Activated naive CD4-positive, alpha-beta T cell treated with anti-CD3 and anti-CD28 coated beads for 36 hours (primary cell): ENCODE measurements at regions of chr7 and their contacts with region 1.

Region 1: GRCh38 chr7:128963327-128963757 is 25.6 kb downstream of the IRF5 start:
- DNase-seq: peak; percentile 80
- H3K4me3 Mint-ChIP-seq: peak overlapping the region; percentile 6
- H3K27ac Mint-ChIP-seq: peak overlapping the region; percentile 87
- H3K4me1 Mint-ChIP-seq: peaks cover 35% of the 10 kb centered on the region
- H3K27me3 Mint-ChIP-seq: no peaks in the 10 kb centered on the region

Region 2: DNA sequence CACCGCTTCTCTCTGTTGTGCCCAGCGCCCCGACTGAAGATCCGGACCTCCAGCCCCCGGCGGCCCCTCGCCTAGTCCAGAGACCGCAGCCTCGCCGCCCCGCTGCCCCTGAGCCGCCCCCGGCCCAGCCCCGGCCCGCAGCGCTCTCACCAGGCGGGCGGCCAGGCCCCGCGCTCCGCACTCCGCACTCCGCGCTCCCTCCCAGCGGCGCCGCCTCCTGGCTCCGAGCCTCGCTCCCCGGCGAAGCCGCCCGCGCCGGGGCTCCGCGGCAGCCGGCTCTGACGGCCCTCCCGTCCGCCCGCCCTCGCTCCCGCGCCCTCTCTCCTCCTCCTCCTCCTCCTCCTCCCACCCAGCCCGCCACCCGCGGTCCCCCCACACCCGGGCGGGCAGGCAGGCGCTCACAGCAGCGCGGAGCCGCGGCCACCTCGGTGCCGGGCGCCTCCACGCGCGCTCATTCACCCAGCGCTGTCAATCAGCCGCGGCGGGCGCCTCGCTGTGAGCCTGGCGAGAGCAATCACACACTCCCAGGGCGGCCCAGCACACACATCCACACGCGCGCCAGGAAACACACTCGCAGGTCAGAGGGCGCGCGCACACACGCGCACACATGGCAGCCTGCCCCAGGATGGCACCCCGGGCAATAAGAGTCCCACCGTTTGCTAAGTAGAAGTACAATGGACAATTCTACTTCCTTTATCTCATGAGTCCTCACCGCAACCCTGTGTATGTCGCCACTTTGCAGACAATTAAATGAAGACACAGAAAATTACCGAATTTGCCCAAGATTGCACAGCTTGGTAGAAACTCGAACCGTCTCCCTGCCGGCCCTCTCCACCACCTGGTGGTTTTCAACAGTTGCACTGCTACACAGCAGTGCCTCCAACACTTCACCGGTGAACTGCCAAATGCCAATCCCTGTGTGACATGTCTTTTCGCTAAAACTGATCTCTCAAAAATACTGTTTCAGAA is 601.6 kb before region 1 on chr7 and contains the start of gene PRRT4:
- CTCF ChIA-PET with region 1: no interaction called
- intact Hi-C with region 1: loop called (anchors 2 kb)
- DNase-seq: peak; percentile 42
- H3K4me3 Mint-ChIP-seq: peak within 1 kb of the TSS; percentile 73
- H3K27ac Mint-ChIP-seq: no peak within 1 kb of the TSS
- H3K4me1 Mint-ChIP-seq: peaks cover 22% of the 10 kb centered on the region
- H3K27me3 Mint-ChIP-seq: peaks cover 46% of the 10 kb centered on the region
- total RNA-seq, gene PRRT4: 0.40 TPM in 1 of 2 experiments, not detected in the other

Region 3: GRCh38 chr7:128938544-128939074 is 24.7 kb before region 1 on chr7:
- CTCF ChIA-PET with region 1: interaction called, 5 read pairs
- intact Hi-C with region 1: loop called (anchors 1 kb)
- DNase-seq: no peak
- H3K4me3 Mint-ChIP-seq: peak overlapping the region; percentile 70
- H3K27ac Mint-ChIP-seq: no peak overlapping the region
- H3K4me1 Mint-ChIP-seq: peaks cover 35% of the 10 kb centered on the region
- H3K27me3 Mint-ChIP-seq: peaks cover 27% of the 10 kb centered on the region

Region 4: DNA sequence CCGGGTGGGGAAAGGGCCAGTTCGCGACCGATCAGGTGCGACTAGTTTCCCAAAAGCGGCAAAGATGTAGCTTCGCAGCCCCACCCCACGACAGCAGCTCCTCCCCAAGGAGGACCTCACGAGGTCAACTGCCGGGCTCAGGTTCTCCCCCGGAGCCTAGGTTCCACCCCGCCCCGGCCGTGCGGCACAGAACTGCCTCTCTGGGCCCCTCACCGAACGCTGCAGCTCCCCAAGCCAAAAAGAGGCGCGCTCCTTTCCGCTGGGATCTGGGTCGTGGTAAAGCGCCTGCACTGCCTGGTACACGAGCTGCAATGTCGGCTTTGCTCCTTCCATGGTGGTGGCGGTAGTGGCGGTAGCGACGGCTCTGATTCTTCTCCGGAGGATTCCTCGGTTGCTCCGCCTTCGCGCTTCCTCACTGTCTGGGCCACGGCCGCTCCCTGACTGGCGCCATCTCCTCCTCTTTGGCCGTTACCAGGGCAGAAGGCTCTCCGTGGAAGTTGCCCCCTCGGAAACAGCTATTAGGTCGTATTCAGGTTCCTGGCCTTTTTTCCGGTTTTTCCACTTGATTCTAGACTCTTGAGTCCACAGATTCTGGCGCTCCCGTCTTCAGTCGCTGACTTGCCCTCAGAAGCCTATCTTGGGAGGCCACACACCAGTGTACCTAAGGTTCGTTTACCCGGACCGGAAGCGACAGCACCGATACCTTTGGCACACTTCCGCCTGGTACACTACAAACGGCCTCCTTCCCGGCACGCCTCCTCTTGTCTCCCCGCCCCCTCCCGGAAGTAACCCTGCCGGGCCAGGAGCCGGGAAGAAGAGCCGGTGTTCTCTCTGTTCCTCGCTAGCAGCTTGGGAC is 91.3 kb after region 1 on chr7 and contains the start of gene TNPO3:
- CTCF ChIA-PET with region 1: no interaction called
- intact Hi-C with region 1: loop called (anchors 1 kb)
- DNase-seq: peak; percentile 95
- H3K4me3 Mint-ChIP-seq: peak within 1 kb of the TSS; percentile 95
- H3K27ac Mint-ChIP-seq: peak within 1 kb of the TSS; percentile 99
- H3K4me1 Mint-ChIP-seq: peaks cover 35% of the 10 kb centered on the region
- H3K27me3 Mint-ChIP-seq: peaks cover 3% of the 10 kb centered on the region
- total RNA-seq, gene TNPO3: 65.7 to 66.4 TPM

Region 5: GRCh38 chr7:129530795-129531391 is 567.6 kb after region 1 on chr7:
- CTCF ChIA-PET with region 1: no interaction called
- intact Hi-C with region 1: loop called (anchors 2 kb)
- DNase-seq: peak; percentile 71
- H3K4me3 Mint-ChIP-seq: no peak overlapping the region
- H3K27ac Mint-ChIP-seq: no peak overlapping the region
- H3K4me1 Mint-ChIP-seq: peaks cover 11% of the 10 kb centered on the region
- H3K27me3 Mint-ChIP-seq: peaks cover 3% of the 10 kb centered on the region